Activated T-helper 2 cell treated with anti-CD3 and anti-CD28 coated beads, Interferon-gamma antibody, Interleukin-2, Interleukin-4, amounts not matched to agents 10 μg/mL and 5 μg/mL and 100 μg/mL, durations not matched to agents 14 hours and 24 hours and 36 hours (primary cell): ENCODE measurements at regions of chr17 and their contacts with region 1.

Region 1: GRCh38 chr17:76271669-76272540 is 6.8 kb downstream of the UBALD2 start:
- DNase-seq: peak; percentile 69
- H3K4me3 Mint-ChIP-seq: peak overlapping the region; percentile 79
- H3K27ac Mint-ChIP-seq: peak overlapping the region; percentile 90
- H3K4me1 Mint-ChIP-seq: peaks cover 47% of the 10 kb centered on the region
- H3K27me3 Mint-ChIP-seq: no peaks in the 10 kb centered on the region

Region 2: GRCh38 chr17:76072148-76072858 is 199.6 kb before region 1 on chr17 and contains the start of gene SRP68:
- intact Hi-C with region 1: loop called (anchors 2 kb)
- DNase-seq: peak; percentile 82
- H3K4me3 Mint-ChIP-seq: peak within 1 kb of the TSS; percentile 99
- H3K27ac Mint-ChIP-seq: peak within 1 kb of the TSS; percentile 100
- H3K4me1 Mint-ChIP-seq: peaks cover 26% of the 10 kb centered on the region
- H3K27me3 Mint-ChIP-seq: peaks cover 34% of the 10 kb centered on the region
- total RNA-seq, gene SRP68: 188 and 194 TPM in 2 replicates

Region 3: GRCh38 chr17:76141212-76142038 is 130.5 kb before region 1 on chr17 and contains the start of gene FOXJ1:
- intact Hi-C with region 1: loop called (anchors 5 kb)
- DNase-seq: peak; percentile 90
- H3K4me3 Mint-ChIP-seq: peak within 1 kb of the TSS; percentile 61
- H3K27ac Mint-ChIP-seq: no peak within 1 kb of the TSS
- H3K4me1 Mint-ChIP-seq: peaks cover 45% of the 10 kb centered on the region
- H3K27me3 Mint-ChIP-seq: peaks cover 11% of the 10 kb centered on the region
- total RNA-seq, gene FOXJ1: 0.11 TPM in 2 replicates

Region 4: GRCh38 chr17:76182016-76182764 is 89.7 kb before region 1 on chr17:
- intact Hi-C with region 1: loop called (anchors 2 kb)
- DNase-seq: peak; percentile 92
- H3K4me3 Mint-ChIP-seq: peak overlapping the region; percentile 30
- H3K27ac Mint-ChIP-seq: peak overlapping the region; percentile 90
- H3K4me1 Mint-ChIP-seq: peaks cover 51% of the 10 kb centered on the region
- H3K27me3 Mint-ChIP-seq: no peaks in the 10 kb centered on the region

Region 5: GRCh38 chr17:76232342-76232741 is 39.6 kb before region 1 on chr17:
- intact Hi-C with region 1: loop called (anchors 5 kb)
- DNase-seq: no peak
- H3K4me3 Mint-ChIP-seq: no peak overlapping the region
- H3K27ac Mint-ChIP-seq: no peak overlapping the region
- H3K4me1 Mint-ChIP-seq: peaks cover 28% of the 10 kb centered on the region
- H3K27me3 Mint-ChIP-seq: no peaks in the 10 kb centered on the region